ENCODE measurements at regions of chr4 and their contacts with region 1.

Region 1: GRCh38 chr4:107757864-107758476 is 37.9 kb upstream of the PAPSS1 start:
- DNase-seq: no peak
- H3K4me3 ChIP-seq: no peak overlapping the region
- H3K27ac ChIP-seq: no peak overlapping the region
- H3K4me1 ChIP-seq: no peaks in the 10 kb centered on the region
- H3K27me3 ChIP-seq: no peaks in the 10 kb centered on the region
- CTCF ChIP-seq: peak; percentile 73

Region 2: DNA sequence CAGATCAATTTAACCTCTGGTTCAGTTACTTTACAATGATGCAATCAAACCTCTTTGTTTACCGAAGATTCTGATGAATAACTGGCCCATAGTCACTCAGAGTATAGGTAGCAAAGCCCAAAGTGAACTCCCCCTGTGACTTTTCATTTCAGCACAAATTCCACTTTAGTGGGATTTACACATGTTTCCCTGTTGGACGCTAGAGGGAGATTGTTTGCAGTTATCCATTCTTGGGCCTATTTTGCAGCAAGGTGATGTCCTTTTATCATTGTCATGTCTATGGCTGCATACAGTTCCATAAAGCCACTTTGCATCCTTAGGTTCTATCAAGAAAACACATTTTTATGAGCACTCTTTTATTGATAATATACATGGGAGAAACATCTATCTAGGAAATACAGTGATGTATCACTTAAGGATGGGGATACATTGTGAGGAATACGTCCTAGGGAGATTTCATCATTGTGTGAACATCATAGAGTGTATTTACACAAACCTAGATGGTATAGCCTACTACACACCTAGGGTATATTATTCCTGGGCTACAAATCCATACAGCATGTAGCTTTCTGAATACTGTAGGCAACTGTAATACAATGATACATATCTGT is 707.3 kb before region 1 on chr4:
- CTCF ChIA-PET with region 1: no interaction called
- POLR2A ChIA-PET with region 1: no interaction called
- intact Hi-C with region 1: no loop called
- DNase-seq: no peak
- H3K4me3 ChIP-seq: no peak overlapping the region
- H3K27ac ChIP-seq: no peak overlapping the region
- H3K4me1 ChIP-seq: no peaks in the 10 kb centered on the region
- H3K27me3 ChIP-seq: no peaks in the 10 kb centered on the region
- CTCF ChIP-seq: peak; percentile 50

Region 3: GRCh38 chr4:107902715-107903114 is 144.7 kb after region 1 on chr4:
- CTCF ChIA-PET with region 1: no interaction called
- POLR2A ChIA-PET with region 1: no interaction called
- intact Hi-C with region 1: no loop called
- DNase-seq: no peak
- H3K4me3 ChIP-seq: no peak overlapping the region
- H3K27ac ChIP-seq: no peak overlapping the region
- H3K4me1 ChIP-seq: peaks cover 3% of the 10 kb centered on the region; the same call in 1 of the 2 replicates
- H3K27me3 ChIP-seq: no peaks in the 10 kb centered on the region
- CTCF ChIP-seq: no peak

Region 4: DNA sequence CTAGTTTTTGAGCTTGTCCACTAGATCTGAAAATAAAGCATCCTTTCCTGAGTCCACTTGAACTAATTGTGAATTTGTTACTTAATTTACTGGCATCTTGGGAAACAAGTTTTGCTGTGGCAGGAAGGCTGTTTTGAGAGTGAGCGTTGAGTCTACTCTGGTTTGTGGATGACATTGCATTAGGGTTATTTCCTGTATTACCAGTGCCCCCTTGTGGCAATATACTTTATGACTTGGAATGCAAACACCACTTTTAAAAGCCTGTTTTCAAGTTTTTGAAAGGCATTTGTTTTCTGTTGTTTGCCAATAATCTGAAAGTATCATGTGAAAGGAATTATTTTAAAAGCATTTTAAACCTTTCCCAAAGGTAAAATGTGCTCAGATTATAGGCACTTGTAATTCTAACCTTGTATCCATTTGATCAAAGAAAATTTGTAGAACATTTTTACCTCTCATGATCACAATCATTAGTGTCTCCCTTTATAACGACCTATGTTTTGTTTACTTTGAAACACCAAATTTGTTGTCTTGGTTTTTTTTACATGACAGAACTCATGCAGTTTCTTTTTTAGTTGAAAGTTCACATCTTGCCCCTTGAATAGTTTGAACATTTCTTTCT is 155.4 kb after region 1 on chr4:
- CTCF ChIA-PET with region 1: no interaction called
- POLR2A ChIA-PET with region 1: no interaction called
- intact Hi-C with region 1: loop called (anchors 1 kb)
- DNase-seq: peak; percentile 11 to 47
- H3K4me3 ChIP-seq: no peak overlapping the region
- H3K27ac ChIP-seq: no peak overlapping the region
- H3K4me1 ChIP-seq: peaks cover 5% of the 10 kb centered on the region; the same call in 1 of the 2 replicates
- H3K27me3 ChIP-seq: no peaks in the 10 kb centered on the region
- CTCF ChIP-seq: peak; percentile 80

Region 5: GRCh38 chr4:108087293-108087967 is 329.5 kb after region 1 on chr4:
- CTCF ChIA-PET with region 1: no interaction called
- POLR2A ChIA-PET with region 1: no interaction called
- intact Hi-C with region 1: no loop called
- DNase-seq: no peak
- H3K4me3 ChIP-seq: no peak overlapping the region
- H3K27ac ChIP-seq: no peak overlapping the region
- H3K4me1 ChIP-seq: no peaks in the 10 kb centered on the region
- H3K27me3 ChIP-seq: no peaks in the 10 kb centered on the region
- CTCF ChIP-seq: no peak